Activated CD8-positive, alpha-beta T cell treated with anti-CD3 and anti-CD28 coated beads for 36 hours (primary cell): ENCODE measurements at regions of chr16 and their contacts with region 1.

Region 1: DNA sequence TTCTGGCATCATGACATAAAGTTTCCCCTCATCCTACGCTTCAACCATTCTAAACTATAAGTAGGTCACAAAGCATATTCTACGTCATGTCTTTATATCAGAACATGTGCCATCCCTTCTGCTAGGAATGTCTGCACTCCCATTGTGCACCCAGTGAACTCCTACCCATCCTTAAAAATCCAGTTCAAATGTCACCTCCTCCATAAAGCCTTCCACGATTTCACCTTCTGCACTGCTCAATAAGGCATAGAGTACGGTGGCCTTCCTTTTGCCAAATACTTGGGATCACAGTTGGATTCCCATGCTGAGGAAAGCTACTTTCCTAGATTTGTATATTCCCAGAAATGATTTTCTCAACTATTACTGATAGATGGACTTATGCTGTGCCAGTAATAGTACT is 186.3 kb upstream of the ZKSCAN2 start:
- DNase-seq: no peak
- ATAC-seq: no peak
- H3K4me3 Mint-ChIP-seq: no peak overlapping the region
- H3K27ac Mint-ChIP-seq: no peak overlapping the region
- H3K4me1 Mint-ChIP-seq: no peaks in the 10 kb centered on the region
- H3K27me3 Mint-ChIP-seq: peaks cover 23% of the 10 kb centered on the region
- CTCF ChIP-seq: no peak

Region 2: DNA sequence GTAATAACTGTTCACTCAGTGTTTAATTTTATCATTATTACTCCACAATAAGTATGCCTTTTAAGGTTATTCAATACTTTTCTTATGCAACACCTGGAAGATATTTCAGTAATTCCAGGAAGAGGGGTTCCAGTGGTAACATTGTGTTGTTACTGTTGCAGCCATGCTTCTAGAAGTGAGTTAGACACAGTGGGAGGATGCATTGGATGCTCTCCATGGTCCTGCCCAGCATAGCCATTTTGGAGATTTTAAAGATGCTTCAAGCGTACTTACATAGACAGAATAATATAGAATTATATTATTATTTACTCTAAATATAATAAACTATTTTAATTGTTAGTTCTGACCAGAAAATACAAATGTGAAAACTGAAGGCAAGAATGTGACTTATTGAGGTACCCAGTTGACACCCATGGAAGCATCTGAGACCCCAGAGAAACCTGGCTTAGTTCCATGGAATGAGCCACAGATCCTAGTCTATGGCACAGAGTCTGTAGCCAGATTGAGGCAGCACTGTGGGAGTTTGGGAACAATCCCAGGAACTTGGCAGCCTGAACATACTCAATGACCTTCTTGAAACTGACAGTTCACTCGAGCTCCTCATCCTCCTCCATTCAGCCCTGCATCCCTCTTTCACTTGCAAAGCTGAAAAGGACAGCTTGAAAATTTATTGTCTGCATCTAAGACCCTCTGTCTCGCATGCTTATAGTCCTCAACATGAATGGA is 57.7 kb after region 1 on chr16:
- CTCF ChIA-PET with region 1: no interaction called
- POLR2A ChIA-PET with region 1: no interaction called
- intact Hi-C with region 1: loop called (anchors 10 kb)
- DNase-seq: no peak
- ATAC-seq: no peak
- H3K4me3 Mint-ChIP-seq: no peak overlapping the region
- H3K27ac Mint-ChIP-seq: no peak overlapping the region
- H3K4me1 Mint-ChIP-seq: no peaks in the 10 kb centered on the region
- H3K27me3 Mint-ChIP-seq: peaks cover 14% of the 10 kb centered on the region
- CTCF ChIP-seq: no peak